ENCODE measurements at regions of chr12 and their contacts with region 1.

Region 1: GRCh38 chr12:57520053-57520871 is at the start of gene DDIT3:
- DNase-seq: peak; percentile 100
- ATAC-seq: peak; percentile 75
- H3K4me3 ChIP-seq: peak within 1 kb of the TSS; percentile 97 to 100 (median 98)
- H3K4me3 Mint-ChIP-seq: peak within 1 kb of the TSS; percentile 99
- H3K27ac ChIP-seq: peak within 1 kb of the TSS; percentile 98 to 100
- H3K27ac Mint-ChIP-seq: peak within 1 kb of the TSS; percentile 100
- H3K4me1 ChIP-seq: peaks cover 42 to 53% of the 10 kb centered on the region in 2 donors
- H3K4me1 Mint-ChIP-seq: peaks cover 57% of the 10 kb centered on the region
- H3K27me3 ChIP-seq: no peaks in the 10 kb centered on the region
- H3K27me3 Mint-ChIP-seq: no peaks in the 10 kb centered on the region
- CTCF ChIP-seq: no peak
- total RNA-seq, gene DDIT3: 35.6 and 39.5 TPM in 2 replicates

Region 2: GRCh38 chr12:57088459-57089248 is 431.6 kb before region 1 on chr12 and contains the start of gene NAB2:
- CTCF ChIA-PET with region 1: no interaction called
- POLR2A ChIA-PET with region 1: no interaction called
- intact Hi-C with region 1: loop called (anchors 5 kb)
- DNase-seq: peak; percentile 96
- ATAC-seq: peak; percentile 62
- H3K4me3 ChIP-seq: peak within 1 kb of the TSS; percentile 75 to 100 (median 80)
- H3K4me3 Mint-ChIP-seq: peak within 1 kb of the TSS; percentile 92
- H3K27ac ChIP-seq: peak within 1 kb of the TSS; percentile 98 to 99
- H3K27ac Mint-ChIP-seq: peak within 1 kb of the TSS; percentile 91
- H3K4me1 ChIP-seq: peaks cover 18 to 40% of the 10 kb centered on the region in 2 donors
- H3K4me1 Mint-ChIP-seq: peaks cover 55% of the 10 kb centered on the region
- H3K27me3 ChIP-seq: no peaks in the 10 kb centered on the region
- H3K27me3 Mint-ChIP-seq: no peaks in the 10 kb centered on the region
- CTCF ChIP-seq: no peak
- total RNA-seq, gene NAB2: 49.0 and 52.1 TPM in 2 replicates

Region 3: GRCh38 chr12:57476162-57476992 is 43.9 kb before region 1 on chr12:
- CTCF ChIA-PET with region 1: interaction called, 6 read pairs
- POLR2A ChIA-PET with region 1: interaction called, 11 read pairs
- intact Hi-C with region 1: loop called (anchors 2 kb)
- DNase-seq: peak; percentile 65
- ATAC-seq: peak; percentile 25
- H3K4me3 ChIP-seq: peak overlapping the region; percentile 78 to 94 (median 85)
- H3K4me3 Mint-ChIP-seq: peak overlapping the region; percentile 99
- H3K27ac ChIP-seq: peak overlapping the region; percentile 91 to 99
- H3K27ac Mint-ChIP-seq: peak overlapping the region; percentile 98
- H3K4me1 ChIP-seq: peaks cover 63 to 84% of the 10 kb centered on the region in 2 donors
- H3K4me1 Mint-ChIP-seq: peaks cover 81% of the 10 kb centered on the region
- H3K27me3 ChIP-seq: no peaks in the 10 kb centered on the region
- H3K27me3 Mint-ChIP-seq: no peaks in the 10 kb centered on the region
- CTCF ChIP-seq: peak; percentile 87

Region 4: GRCh38 chr12:57563358-57563757 is 43.1 kb after region 1 on chr12:
- CTCF ChIA-PET with region 1: no interaction called
- POLR2A ChIA-PET with region 1: no interaction called
- intact Hi-C with region 1: no loop called
- DNase-seq: no peak
- ATAC-seq: no peak
- H3K4me3 ChIP-seq: no peak overlapping the region
- H3K4me3 Mint-ChIP-seq: no peak overlapping the region
- H3K27ac ChIP-seq: no peak overlapping the region
- H3K27ac Mint-ChIP-seq: no peak overlapping the region
- H3K4me1 ChIP-seq: no peaks in the 10 kb centered on the region
- H3K4me1 Mint-ChIP-seq: no peaks in the 10 kb centered on the region
- H3K27me3 ChIP-seq: peaks cover 0 to 15% (median 2%) of the 10 kb centered on the region in 4 experiments
- H3K27me3 Mint-ChIP-seq: peaks cover 31% of the 10 kb centered on the region
- CTCF ChIP-seq: no peak

Region 5: GRCh38 chr12:57583008-57583831 is 63.0 kb after region 1 on chr12:
- CTCF ChIA-PET with region 1: interaction called, 3 read pairs
- POLR2A ChIA-PET with region 1: interaction called, 4 read pairs
- intact Hi-C with region 1: loop called (anchors 2 kb)
- DNase-seq: peak; percentile 88
- ATAC-seq: peak; percentile 100
- H3K4me3 ChIP-seq: no peak overlapping the region
- H3K4me3 Mint-ChIP-seq: no peak overlapping the region
- H3K27ac ChIP-seq: no peak overlapping the region
- H3K27ac Mint-ChIP-seq: no peak overlapping the region
- H3K4me1 ChIP-seq: peaks cover 0 to 3% of the 10 kb centered on the region in 2 donors
- H3K4me1 Mint-ChIP-seq: peaks cover 2% of the 10 kb centered on the region
- H3K27me3 ChIP-seq: peaks cover 0 to 46% (median 10%) of the 10 kb centered on the region in 4 experiments
- H3K27me3 Mint-ChIP-seq: peaks cover 14% of the 10 kb centered on the region
- CTCF ChIP-seq: peak; percentile 98

Region 6: GRCh38 chr12:57751788-57752667 is 231.8 kb after region 1 on chr12 and contains the start of gene CDK4:
- CTCF ChIA-PET with region 1: interaction called, 3 read pairs
- POLR2A ChIA-PET with region 1: no interaction called
- intact Hi-C with region 1: loop called (anchors 2 kb)
- DNase-seq: peak; percentile 100
- ATAC-seq: peak; percentile 78
- H3K4me3 ChIP-seq: peak within 1 kb of the TSS; percentile 51 to 84 (median 78)
- H3K4me3 Mint-ChIP-seq: peak within 1 kb of the TSS; percentile 91
- H3K27ac ChIP-seq: peak within 1 kb of the TSS; percentile 74 to 98
- H3K27ac Mint-ChIP-seq: peak within 1 kb of the TSS; percentile 95
- H3K4me1 ChIP-seq: peaks cover 39 to 50% of the 10 kb centered on the region in 2 donors
- H3K4me1 Mint-ChIP-seq: peaks cover 55% of the 10 kb centered on the region
- H3K27me3 ChIP-seq: no peaks in the 10 kb centered on the region
- H3K27me3 Mint-ChIP-seq: no peaks in the 10 kb centered on the region
- CTCF ChIP-seq: no peak
- total RNA-seq, gene CDK4: 43.1 and 44.6 TPM in 2 replicates

Measured in B cell (primary cell).